CD4-positive, alpha-beta T cell (primary cell): ENCODE measurements at regions of chr2 and their contacts with region 1.

Region 1: GRCh38 chr2:28566521-28567041 is 70.7 kb downstream of the PLB1 start:
- DNase-seq: peak; percentile 77 to 95 (median 88)
- ATAC-seq: peak; percentile 97
- H3K4me3 ChIP-seq: peak overlapping the region; percentile 68
- H3K4me3 Mint-ChIP-seq: peak overlapping the region; percentile 95
- H3K27ac ChIP-seq: peak overlapping the region in 1 of 2 donors; percentile 3
- H3K27ac Mint-ChIP-seq: peak overlapping the region; percentile 86
- H3K4me1 ChIP-seq: peaks cover 19% of the 10 kb centered on the region
- H3K4me1 Mint-ChIP-seq: peaks cover 20% of the 10 kb centered on the region
- H3K27me3 ChIP-seq: no peaks in the 10 kb centered on the region
- H3K27me3 Mint-ChIP-seq: no peaks in the 10 kb centered on the region
- CTCF ChIP-seq: peak; percentile 100

Region 2: DNA sequence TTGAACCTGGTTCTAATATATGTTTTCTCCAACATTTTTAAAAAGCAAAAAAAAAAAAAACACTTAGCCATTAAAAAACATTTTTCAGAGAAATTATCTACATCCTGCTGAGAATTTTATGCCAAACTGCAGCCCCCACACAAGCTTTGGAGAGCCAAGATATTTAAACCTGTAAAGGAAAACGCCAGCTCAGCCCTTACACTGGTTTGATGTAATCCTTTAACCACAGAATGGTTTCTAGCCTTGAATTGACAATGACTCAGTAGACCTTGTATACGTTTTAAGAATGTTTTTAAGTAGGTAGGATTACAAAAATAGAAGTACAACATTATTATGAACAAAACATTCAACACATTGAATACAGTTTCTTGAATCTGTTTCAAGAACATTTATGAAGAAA is 562.5 kb before region 1 on chr2:
- CTCF ChIA-PET with region 1: no interaction called
- POLR2A ChIA-PET with region 1: no interaction called
- intact Hi-C with region 1: no loop called
- DNase-seq: peak in 1 of 14 experiments; percentile 7
- ATAC-seq: no peak
- H3K4me3 ChIP-seq: no peak overlapping the region
- H3K4me3 Mint-ChIP-seq: no peak overlapping the region
- H3K27ac ChIP-seq: no peak overlapping the region
- H3K27ac Mint-ChIP-seq: no peak overlapping the region
- H3K4me1 ChIP-seq: no peaks in the 10 kb centered on the region
- H3K4me1 Mint-ChIP-seq: peaks cover 9% of the 10 kb centered on the region
- H3K27me3 ChIP-seq: no peaks in the 10 kb centered on the region
- H3K27me3 Mint-ChIP-seq: no peaks in the 10 kb centered on the region
- CTCF ChIP-seq: no peak

Region 3: DNA sequence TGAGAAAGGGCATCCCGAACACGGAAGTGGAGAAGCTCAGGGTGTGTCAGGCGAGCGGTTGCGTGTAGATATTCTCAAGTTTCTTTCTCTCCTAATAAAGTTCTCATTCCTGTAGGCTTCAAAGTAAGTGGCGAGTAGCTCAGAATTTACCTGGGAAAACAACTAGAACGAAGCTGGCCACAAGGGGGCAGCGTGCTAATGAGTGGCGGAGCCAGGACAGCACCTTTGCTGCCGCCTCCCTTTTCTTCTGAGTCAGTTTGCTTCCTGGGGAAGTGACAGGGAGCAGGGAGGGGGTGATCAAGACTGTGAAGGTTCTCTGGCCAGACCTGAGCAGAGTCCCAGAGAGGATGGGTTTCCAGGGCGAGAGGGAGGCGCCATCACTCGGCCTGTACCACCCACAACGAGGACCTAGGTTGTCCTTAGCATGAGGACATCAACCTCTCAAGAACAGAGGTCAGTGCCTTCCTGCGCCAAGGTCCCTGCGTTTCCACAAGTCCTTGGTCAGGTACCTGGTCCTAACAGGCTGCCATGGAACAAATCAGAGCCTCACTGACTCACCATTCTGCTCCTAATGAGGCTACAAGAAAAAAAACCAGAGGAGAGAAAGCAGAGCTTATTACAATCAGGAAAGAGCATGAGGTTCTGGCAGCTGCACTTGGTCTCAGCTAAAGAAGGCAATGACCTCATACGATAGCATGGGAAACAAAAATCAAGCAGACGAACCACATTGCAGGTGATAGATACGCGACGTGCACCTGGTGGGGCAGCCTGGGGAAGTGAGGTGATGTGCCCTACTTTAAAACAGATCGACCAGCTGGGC is 27.9 kb after region 1 on chr2:
- CTCF ChIA-PET with region 1: interaction called, 43 read pairs
- POLR2A ChIA-PET with region 1: interaction called, 5 read pairs
- intact Hi-C with region 1: loop called (anchors 1 to 2 kb)
- DNase-seq: peak; percentile 78 to 96 (median 86)
- ATAC-seq: peak; percentile 86
- H3K4me3 ChIP-seq: peak overlapping the region; percentile 19
- H3K4me3 Mint-ChIP-seq: peak overlapping the region; percentile 52
- H3K27ac ChIP-seq: peak overlapping the region; percentile 50 to 72
- H3K27ac Mint-ChIP-seq: peak overlapping the region; percentile 74
- H3K4me1 ChIP-seq: peaks cover 15% of the 10 kb centered on the region
- H3K4me1 Mint-ChIP-seq: peaks cover 15% of the 10 kb centered on the region
- H3K27me3 ChIP-seq: no peaks in the 10 kb centered on the region
- H3K27me3 Mint-ChIP-seq: no peaks in the 10 kb centered on the region
- CTCF ChIP-seq: peak; percentile 82

Region 4: DNA sequence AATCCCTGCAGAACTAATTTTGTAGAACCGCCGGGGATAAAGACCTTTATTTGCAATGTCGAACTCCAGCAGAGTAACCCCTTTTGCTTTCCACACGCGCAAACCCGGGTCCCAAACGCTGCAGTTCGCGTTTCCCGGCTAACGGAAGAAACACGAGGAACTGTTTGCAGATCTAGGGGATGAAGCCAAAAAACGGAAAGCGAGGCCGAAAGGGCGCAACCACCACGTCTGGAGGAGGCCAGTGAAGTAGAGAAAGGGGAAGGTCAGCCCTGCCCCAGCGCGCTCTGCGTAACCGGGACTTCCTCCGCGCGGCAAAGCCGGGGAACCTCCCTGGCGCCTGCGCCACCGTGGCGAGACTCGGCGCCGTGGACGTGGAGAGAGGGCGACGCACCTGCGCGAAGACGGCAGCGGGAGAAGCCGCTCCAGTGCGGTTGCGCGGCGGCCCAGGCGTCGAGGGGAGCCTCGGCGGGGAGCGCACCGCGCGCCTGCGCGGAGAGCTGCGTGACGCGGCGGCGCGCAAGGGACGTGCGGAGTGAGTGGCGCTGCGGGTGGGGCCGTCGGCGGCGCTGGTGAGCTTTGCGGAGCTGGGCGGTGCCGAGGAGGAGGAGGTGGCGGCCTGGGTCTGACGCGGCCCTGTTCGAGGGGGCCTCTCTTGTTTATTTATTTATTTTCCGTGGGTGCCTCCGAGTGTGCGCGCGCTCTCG is 184.8 kb after region 1 on chr2 and contains the start of gene PPP1CB:
- CTCF ChIA-PET with region 1: interaction called, 32 read pairs
- POLR2A ChIA-PET with region 1: interaction called, 11 read pairs
- intact Hi-C with region 1: loop called (anchors 1 to 2 kb)
- DNase-seq: peak; percentile 91 to 100 (median 96)
- ATAC-seq: peak; percentile 84
- H3K4me3 ChIP-seq: peak within 1 kb of the TSS; percentile 92
- H3K4me3 Mint-ChIP-seq: peak within 1 kb of the TSS; percentile 95
- H3K27ac ChIP-seq: peak within 1 kb of the TSS; percentile 98
- H3K27ac Mint-ChIP-seq: peak within 1 kb of the TSS; percentile 95
- H3K4me1 ChIP-seq: peaks cover 56% of the 10 kb centered on the region
- H3K4me1 Mint-ChIP-seq: peaks cover 73% of the 10 kb centered on the region
- H3K27me3 ChIP-seq: no peaks in the 10 kb centered on the region
- H3K27me3 Mint-ChIP-seq: no peaks in the 10 kb centered on the region
- CTCF ChIP-seq: peak; percentile 32
- total RNA-seq, gene PPP1CB: 290 to 304 TPM

Region 5: GRCh38 chr2:28810384-28811285 is 244.1 kb after region 1 on chr2 and contains the start of gene SPDYA:
- CTCF ChIA-PET with region 1: interaction called, 7 read pairs
- POLR2A ChIA-PET with region 1: no interaction called
- intact Hi-C with region 1: loop called in 1 of 2 experiments (anchors 5 kb)
- DNase-seq: peak; percentile 55 to 91 (median 74)
- ATAC-seq: peak; percentile 91
- H3K4me3 ChIP-seq: peak within 1 kb of the TSS; percentile 66
- H3K4me3 Mint-ChIP-seq: peak within 1 kb of the TSS; percentile 93
- H3K27ac ChIP-seq: no peak within 1 kb of the TSS
- H3K27ac Mint-ChIP-seq: peak within 1 kb of the TSS; percentile 74
- H3K4me1 ChIP-seq: peaks cover 16% of the 10 kb centered on the region
- H3K4me1 Mint-ChIP-seq: peaks cover 22% of the 10 kb centered on the region
- H3K27me3 ChIP-seq: no peaks in the 10 kb centered on the region
- H3K27me3 Mint-ChIP-seq: no peaks in the 10 kb centered on the region
- CTCF ChIP-seq: no peak
- total RNA-seq, gene SPDYA: 12.7 to 12.8 TPM

Region 6: DNA sequence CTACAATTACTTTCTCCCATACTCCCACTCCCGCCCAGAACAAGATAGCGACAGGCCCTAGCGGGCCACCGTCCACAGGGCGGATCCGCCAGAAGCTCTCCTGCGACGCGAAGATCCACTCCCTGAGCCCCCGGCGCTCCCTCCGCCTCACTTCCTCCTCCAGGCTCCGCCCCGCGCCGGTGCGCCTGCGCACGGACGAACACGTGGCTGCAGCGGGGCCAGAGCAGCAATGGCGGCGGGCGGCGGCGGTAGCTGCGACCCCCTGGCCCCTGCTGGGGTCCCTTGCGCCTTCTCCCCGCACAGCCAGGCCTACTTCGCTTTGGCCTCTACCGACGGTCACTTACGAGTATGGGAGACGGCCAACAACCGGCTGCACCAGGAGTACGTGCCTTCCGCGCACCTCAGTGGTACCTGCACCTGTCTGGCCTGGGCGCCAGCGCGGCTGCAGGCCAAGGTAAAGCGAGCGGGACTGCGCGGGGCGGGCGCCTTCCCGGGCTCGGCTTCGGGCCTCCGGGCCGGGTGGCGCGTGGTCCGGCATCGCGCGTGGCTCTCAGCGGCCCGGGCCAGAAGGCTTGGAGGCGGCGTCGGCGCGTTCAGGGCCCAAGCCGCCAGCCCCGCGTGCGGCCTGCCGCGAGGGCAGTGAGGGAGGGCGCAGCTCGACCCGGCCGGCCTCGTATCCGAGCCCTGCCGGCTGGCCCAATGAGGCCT is 328.0 kb after region 1 on chr2 and contains the start of gene WDR43:
- CTCF ChIA-PET with region 1: interaction called, 14 read pairs
- POLR2A ChIA-PET with region 1: interaction called, 5 read pairs
- intact Hi-C with region 1: loop called (anchors 5 to 10 kb)
- DNase-seq: peak; percentile 90 to 99 (median 97)
- ATAC-seq: peak; percentile 97
- H3K4me3 ChIP-seq: peak within 1 kb of the TSS; percentile 89
- H3K4me3 Mint-ChIP-seq: peak within 1 kb of the TSS; percentile 97
- H3K27ac ChIP-seq: peak within 1 kb of the TSS; percentile 55 to 59
- H3K27ac Mint-ChIP-seq: peak within 1 kb of the TSS; percentile 91
- H3K4me1 ChIP-seq: peaks cover 24% of the 10 kb centered on the region
- H3K4me1 Mint-ChIP-seq: peaks cover 49% of the 10 kb centered on the region
- H3K27me3 ChIP-seq: no peaks in the 10 kb centered on the region
- H3K27me3 Mint-ChIP-seq: no peaks in the 10 kb centered on the region
- CTCF ChIP-seq: no peak
- total RNA-seq, gene WDR43: 62.4 to 73.2 TPM

Region 7: DNA sequence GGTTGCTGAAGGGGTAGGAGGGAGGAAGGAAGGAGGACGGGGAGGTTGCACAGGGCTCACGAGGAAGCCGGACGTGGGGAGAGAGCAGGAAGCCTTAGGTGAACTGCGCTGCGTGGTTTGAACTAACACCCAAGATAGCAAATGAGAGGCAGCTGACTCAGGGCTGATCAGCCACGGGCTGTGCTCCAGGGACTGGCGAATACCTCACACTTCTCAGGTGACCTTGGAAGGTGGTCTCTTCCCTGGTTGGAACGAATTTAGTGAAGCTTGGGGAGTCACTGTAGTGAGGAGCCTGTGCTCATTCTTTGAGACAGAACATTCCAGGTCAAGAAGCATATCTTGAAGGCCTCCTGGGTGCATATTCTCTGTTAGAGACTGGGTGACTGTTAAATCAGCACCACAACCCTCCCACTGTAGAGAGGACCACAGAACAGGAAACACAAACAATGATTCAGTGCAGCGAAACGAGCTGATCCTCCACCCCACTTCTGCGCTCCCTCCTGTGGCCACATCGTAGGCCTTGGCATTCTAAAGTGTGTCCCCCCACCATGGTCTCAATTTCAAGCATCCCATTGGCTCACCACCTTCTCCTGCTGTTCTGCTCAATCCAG is 448.3 kb after region 1 on chr2:
- CTCF ChIA-PET with region 1: interaction called, 3 read pairs
- POLR2A ChIA-PET with region 1: no interaction called
- intact Hi-C with region 1: loop called (anchors 5 to 10 kb)
- DNase-seq: peak; percentile 57 to 90 (median 72)
- ATAC-seq: peak; percentile 66
- H3K4me3 ChIP-seq: peak overlapping the region; percentile 37
- H3K4me3 Mint-ChIP-seq: peak overlapping the region; percentile 82
- H3K27ac ChIP-seq: peak overlapping the region; percentile 81 to 86
- H3K27ac Mint-ChIP-seq: peak overlapping the region; percentile 99
- H3K4me1 ChIP-seq: peaks cover 84% of the 10 kb centered on the region
- H3K4me1 Mint-ChIP-seq: peaks cover 73% of the 10 kb centered on the region
- H3K27me3 ChIP-seq: no peaks in the 10 kb centered on the region
- H3K27me3 Mint-ChIP-seq: no peaks in the 10 kb centered on the region
- CTCF ChIP-seq: peak; percentile 34